Common myeloid progenitor, CD34-positive (primary cell): ENCODE measurements at regions of chr4 and their contacts with region 1.

Region 1: DNA sequence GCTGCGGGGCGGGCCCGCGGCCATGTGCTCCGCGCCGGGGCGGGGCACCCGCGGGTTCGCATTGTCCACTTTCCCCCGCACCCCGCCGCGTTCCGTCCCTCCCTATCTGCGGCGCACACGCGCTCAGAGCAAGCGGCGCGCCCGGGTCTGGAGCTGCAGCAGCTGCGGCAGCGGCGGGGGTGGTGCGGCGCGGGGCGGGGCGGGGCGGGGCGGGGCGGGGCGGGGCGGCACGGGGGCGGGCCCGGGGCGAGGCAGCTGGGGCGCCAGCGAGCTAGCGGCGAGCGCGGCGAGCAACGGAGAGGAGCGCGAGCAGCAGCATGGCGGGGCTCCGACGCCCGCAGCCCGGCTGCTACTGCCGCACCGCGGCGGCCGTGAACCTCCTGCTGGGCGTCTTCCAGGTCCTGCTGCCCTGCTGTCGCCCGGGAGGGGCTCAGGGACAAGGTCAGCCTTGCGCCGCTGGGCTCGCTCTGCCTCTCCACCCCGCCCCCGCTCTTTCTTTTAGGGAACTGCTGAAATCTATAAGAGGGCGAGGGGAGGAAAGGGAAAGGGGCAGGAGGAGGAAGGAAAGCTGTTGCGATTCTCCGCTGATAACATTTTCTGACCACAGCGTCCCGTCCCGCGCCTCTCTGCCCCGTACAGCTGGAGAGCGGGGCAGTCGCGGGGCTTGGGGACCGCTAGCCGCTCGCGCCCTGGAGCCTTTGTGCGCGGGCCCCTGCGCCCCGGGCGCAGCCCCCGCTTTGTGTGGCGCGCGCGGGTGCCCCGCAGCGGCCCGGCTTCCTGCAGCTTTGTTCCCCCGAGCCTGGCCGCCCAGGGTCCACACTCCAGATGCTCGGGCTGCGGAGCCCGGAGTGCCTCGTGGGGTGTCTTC is at the start of gene TMEM131L:
- DNase-seq: peak; percentile 72 to 86 (median 79)
- H3K4me3 ChIP-seq: peak within 1 kb of the TSS; percentile 75 to 95 (median 92)
- H3K27ac ChIP-seq: peak within 1 kb of the TSS in 1 of 2 experiments; percentile 73
- H3K4me1 ChIP-seq: peaks cover 22 to 42% (median 32%) of the 10 kb centered on the region in 4 experiments
- H3K27me3 ChIP-seq: no peaks in the 10 kb centered on the region

Region 2: DNA sequence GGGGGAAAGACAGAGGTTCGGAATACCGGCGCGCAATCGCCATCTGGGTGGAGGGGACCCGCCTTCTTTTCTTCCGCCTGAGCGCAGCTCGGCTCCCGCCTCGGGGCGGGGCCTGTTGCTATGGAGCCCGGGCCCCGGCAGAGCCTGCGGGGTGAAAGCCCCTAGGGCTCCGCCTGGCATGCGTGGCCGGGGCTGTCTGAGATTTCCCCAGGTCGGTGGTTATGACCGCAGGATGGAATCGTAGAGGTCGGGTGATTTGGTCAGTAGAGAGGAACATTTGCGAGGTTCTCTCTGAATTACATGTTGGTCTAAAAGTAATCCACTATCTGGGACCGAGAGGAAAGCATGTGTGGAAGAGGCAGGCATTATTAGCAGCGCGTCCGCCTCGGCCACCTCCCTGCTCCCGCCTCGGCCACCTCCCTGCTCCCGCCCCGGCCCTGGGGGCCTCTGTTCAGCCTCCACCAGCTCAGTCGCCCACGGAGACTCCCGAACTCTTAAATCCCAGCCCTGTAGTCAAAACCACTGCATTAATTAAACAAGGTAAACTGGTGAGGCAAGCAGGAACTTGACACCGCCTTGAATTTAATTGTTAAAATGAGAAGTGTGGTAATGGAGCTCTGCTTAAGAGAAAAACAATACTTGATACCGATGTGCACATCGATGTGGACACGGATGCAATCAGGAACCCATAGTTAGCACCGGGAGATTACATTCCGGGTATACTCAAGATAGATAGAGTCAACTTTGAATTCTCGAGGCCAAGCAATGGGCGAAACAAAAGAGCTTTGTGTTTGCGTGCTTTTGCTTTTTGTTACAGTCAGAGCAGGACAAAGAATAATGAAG is 216.9 kb before region 1 on chr4:
- CTCF ChIA-PET with region 1: no interaction called
- POLR2A ChIA-PET with region 1: no interaction called
- DNase-seq: peak; percentile 77 to 88 (median 85)
- H3K4me3 ChIP-seq: peak overlapping the region; percentile 18 to 94 (median 76)
- H3K27ac ChIP-seq: no peak overlapping the region
- H3K4me1 ChIP-seq: peaks cover 2 to 14% (median 10%) of the 10 kb centered on the region in 4 experiments
- H3K27me3 ChIP-seq: peaks cover 0 to 3% (median 0%) of the 10 kb centered on the region in 5 experiments

Region 3: DNA sequence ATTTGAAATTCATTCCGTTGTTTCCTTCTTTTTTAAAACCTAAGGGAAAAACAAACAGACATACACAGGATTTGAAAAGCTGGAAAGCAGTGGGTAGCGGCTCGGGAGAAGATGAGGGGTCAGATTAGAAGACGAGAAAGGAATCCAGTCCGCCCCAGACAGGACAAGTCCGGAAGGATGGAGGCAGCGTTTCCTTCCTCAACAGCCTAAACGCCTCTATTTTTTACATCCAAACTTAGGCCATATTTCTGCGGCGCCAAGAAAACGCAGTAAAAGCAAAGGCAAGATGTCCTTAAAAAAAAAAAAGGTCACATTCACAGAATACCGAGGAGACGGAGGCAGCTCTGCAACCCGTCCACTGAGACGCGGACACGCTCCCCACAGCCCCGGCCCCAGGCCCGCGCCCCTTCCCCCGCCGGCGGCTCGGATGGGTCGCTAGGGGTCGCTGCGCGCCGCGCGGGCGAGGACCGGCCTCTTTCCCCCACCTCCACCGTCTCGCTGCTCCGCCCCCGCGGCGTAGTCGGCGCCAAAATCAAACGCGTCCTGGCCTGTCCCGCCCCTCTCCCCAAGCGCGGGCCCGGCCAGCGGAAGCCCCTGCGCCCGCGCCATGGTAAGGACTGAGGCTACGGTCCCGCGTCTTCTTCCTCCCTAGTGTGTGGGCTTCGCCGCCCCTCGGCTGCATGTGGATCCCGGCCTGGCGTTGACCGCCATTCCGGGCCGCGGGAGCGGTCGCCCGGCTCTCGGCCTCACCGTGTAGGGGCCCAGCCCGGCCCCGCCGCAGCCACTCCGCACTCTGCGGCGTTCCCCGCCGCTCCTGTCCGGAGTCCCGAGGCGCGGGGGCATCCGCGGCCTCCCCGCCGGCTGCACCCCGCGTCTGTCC is 121.9 kb before region 1 on chr4 and contains the start of gene MND1:
- CTCF ChIA-PET with region 1: interaction called, 10 read pairs
- POLR2A ChIA-PET with region 1: no interaction called
- DNase-seq: peak; percentile 80 to 90 (median 86)
- H3K4me3 ChIP-seq: peak within 1 kb of the TSS; percentile 82 to 96 (median 93)
- H3K27ac ChIP-seq: peak within 1 kb of the TSS in 1 of 2 experiments; percentile 50
- H3K4me1 ChIP-seq: peaks cover 12 to 30% (median 21%) of the 10 kb centered on the region in 4 experiments
- H3K27me3 ChIP-seq: no peaks in the 10 kb centered on the region

Region 4: GRCh38 chr4:153451911-153452657 is 14.2 kb before region 1 on chr4:
- CTCF ChIA-PET with region 1: interaction called, 12 read pairs
- POLR2A ChIA-PET with region 1: no interaction called
- DNase-seq: no peak
- H3K4me3 ChIP-seq: no peak overlapping the region
- H3K27ac ChIP-seq: no peak overlapping the region
- H3K4me1 ChIP-seq: peaks cover 3 to 20% (median 7%) of the 10 kb centered on the region in 4 experiments
- H3K27me3 ChIP-seq: no peaks in the 10 kb centered on the region

Region 5: GRCh38 chr4:153488006-153488891 is 21.9 kb after region 1 on chr4:
- CTCF ChIA-PET with region 1: interaction called, 29 read pairs
- POLR2A ChIA-PET with region 1: no interaction called
- DNase-seq: peak; percentile 56 to 92 (median 91)
- H3K4me3 ChIP-seq: peak overlapping the region in 6 of 7 experiments; percentile 34 to 71 (median 47)
- H3K27ac ChIP-seq: peak overlapping the region; percentile 43 to 80
- H3K4me1 ChIP-seq: peaks cover 14 to 33% (median 28%) of the 10 kb centered on the region in 4 experiments
- H3K27me3 ChIP-seq: no peaks in the 10 kb centered on the region

Region 6: DNA sequence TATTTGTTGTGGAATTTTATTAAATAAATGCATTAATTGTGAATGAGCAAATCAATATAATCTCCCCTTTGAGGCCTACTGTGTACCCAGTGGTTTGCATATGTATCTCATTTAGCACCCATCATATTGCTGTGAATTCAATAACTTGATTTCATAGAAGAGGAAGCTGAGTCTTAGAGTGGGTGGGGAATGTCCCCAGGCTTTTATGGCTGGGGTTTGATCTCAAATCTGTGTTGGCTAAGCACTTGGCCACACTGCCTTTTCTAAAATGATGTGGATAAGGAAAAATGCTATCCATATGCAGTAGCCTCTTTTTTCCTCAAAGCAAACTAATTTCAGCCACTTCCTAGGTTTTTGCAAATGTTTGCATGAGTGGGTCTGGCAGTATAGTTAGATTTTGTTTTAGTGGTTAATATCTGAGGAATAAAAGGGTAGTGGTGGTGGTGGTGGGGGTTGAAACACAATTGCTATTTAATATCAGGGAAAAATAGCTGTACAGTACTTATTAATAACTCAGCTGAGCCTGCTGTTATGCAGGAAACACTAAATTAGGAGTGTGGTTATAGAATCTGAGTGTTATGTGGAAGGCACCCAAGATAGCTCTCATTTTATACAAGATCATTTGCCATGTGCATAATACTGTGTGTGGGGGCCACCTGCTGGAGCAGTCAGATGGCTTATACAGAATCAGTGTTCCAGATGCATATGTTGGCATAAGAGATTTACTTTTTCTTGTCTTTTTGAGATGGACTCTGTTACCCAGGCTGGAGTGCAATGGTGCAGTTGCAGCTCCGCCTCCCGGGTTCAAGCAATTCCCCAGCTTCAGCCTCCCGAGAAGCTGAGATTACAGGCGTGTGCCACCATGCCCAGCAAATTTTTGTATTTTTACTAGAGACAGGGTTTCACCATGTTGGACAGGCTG is 107.8 kb after region 1 on chr4:
- CTCF ChIA-PET with region 1: interaction called, 18 read pairs
- POLR2A ChIA-PET with region 1: no interaction called
- DNase-seq: peak; percentile 67 to 82 (median 80)
- H3K4me3 ChIP-seq: no peak overlapping the region
- H3K27ac ChIP-seq: no peak overlapping the region
- H3K4me1 ChIP-seq: peaks cover 0 to 11% (median 4%) of the 10 kb centered on the region in 4 experiments
- H3K27me3 ChIP-seq: no peaks in the 10 kb centered on the region